Posterior cingulate gyrus (tissue), 11 donors: ENCODE measurements at regions of chr16 and their contacts with region 1.

Region 1: GRCh38 chr16:48542020-48542473 is 67.9 kb downstream of the N4BP1 start:
- DNase-seq: peak; percentile 46 to 96 (median 74)

Region 2: DNA sequence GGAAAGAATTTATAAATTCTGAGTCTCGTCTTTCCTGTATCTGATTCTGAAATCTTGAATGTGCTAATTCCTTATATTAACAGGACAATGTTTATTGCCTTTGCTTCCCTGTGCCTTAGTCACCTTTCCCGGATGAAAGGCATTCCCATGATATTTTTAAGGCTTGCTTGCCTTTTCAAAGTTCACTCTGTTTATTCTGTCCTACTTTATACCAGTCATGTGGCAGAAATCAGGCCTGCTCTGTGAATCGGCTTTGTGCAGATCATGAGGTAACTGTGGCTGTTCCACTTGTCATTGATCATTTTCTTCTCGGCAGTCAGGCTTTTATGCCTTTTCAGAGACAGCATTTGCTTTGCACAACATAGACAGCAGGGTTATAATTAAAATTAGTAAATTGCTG is 265.9 kb before region 1 on chr16:
- intact Hi-C with region 1: loop called (anchors 5 kb)
- DNase-seq: peak in 1 of 10 donors; percentile 16

Region 3: DNA sequence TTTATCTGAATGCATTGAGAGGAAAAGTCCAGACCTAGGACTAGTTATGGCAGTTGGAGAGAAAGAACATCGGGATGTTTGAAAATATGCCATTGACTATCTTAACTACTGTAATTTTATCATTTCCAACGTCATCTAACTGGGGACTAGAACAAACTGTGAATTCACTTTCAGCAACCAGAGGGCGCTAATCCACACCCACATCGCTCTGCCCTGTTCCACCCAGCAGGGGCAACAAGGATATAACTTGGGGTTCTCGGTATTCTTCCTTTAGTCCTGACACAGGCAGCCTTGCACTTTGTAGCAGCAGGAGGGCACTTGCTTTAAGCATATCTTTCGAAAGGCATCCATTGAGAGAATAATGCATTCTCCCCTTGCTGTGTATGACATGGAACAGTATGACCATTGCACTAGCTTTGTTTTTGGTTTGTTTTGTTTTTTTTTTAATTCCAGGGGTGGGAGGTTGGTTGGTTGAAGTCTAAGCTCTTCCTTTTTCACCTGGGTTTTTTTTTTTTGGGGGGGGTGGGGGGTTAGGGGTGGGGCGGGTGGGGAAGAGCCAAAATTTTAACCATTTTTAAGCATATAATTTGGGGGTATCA is 188.4 kb before region 1 on chr16:
- intact Hi-C with region 1: loop called (anchors 1 kb)
- DNase-seq: peak in 4 of 10 donors; percentile 47 to 91 (median 64)

Region 4: GRCh38 chr16:48365581-48366164 is 176.4 kb before region 1 on chr16:
- intact Hi-C with region 1: loop called (anchors 5 kb)
- DNase-seq: peak; percentile 74 to 98 (median 86)

Region 5: GRCh38 chr16:48641770-48642169 is 99.7 kb after region 1 on chr16:
- intact Hi-C with region 1: no loop called
- DNase-seq: no peak